PC-9 (cell line): ENCODE measurements at regions of chr3 and their contacts with region 1.

Region 1: GRCh38 chr3:50260027-50260941 is 8.7 kb upstream of the SEMA3B start:
- DNase-seq: peak; percentile 73 to 94
- H3K4me3 ChIP-seq: peak overlapping the region; percentile 60
- H3K27ac ChIP-seq: no peak overlapping the region
- H3K4me1 ChIP-seq: peaks cover 19% of the 10 kb centered on the region
- H3K27me3 ChIP-seq: no peaks in the 10 kb centered on the region
- CTCF ChIP-seq: peak; percentile 82

Region 2: GRCh38 chr3:50044976-50045375 is 215.3 kb before region 1 on chr3:
- CTCF ChIA-PET with region 1: no interaction called
- POLR2A ChIA-PET with region 1: no interaction called
- intact Hi-C with region 1: no loop called
- DNase-seq: no peak
- H3K4me3 ChIP-seq: no peak overlapping the region
- H3K27ac ChIP-seq: no peak overlapping the region
- H3K4me1 ChIP-seq: no peaks in the 10 kb centered on the region
- H3K27me3 ChIP-seq: no peaks in the 10 kb centered on the region
- CTCF ChIP-seq: no peak

Region 3: DNA sequence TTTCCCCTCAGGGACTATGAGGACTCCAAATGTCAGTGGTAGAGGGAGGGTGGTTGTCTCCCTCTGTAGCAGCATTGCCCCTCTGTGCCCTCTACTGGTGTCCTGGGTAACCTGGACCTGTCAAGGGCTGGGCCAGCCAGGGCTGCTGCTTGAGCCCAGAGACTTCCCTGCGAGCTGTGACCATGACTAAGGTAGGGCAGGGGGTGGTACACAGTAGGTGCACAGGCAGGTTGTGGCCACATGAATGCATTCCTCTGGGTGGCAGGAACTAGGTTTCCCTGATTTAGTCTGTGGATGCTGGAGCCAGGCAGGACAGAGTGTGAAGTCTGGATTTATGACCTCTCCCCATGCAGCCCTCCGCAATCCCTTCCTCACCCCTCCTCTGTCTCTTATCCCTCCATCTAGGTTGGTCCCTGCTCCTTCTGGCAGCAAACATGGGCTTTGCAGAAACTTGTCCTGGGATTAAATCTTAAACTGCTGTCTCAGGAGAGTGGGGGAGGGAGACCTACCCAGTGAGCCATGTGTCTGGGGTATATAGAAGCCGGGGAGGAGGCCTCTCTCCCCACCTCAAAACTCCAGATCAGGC is 113.9 kb before region 1 on chr3:
- CTCF ChIA-PET with region 1: no interaction called
- POLR2A ChIA-PET with region 1: no interaction called
- intact Hi-C with region 1: no loop called
- DNase-seq: no peak
- H3K4me3 ChIP-seq: no peak overlapping the region
- H3K27ac ChIP-seq: no peak overlapping the region
- H3K4me1 ChIP-seq: no peaks in the 10 kb centered on the region
- H3K27me3 ChIP-seq: no peaks in the 10 kb centered on the region
- CTCF ChIP-seq: no peak

Region 4: DNA sequence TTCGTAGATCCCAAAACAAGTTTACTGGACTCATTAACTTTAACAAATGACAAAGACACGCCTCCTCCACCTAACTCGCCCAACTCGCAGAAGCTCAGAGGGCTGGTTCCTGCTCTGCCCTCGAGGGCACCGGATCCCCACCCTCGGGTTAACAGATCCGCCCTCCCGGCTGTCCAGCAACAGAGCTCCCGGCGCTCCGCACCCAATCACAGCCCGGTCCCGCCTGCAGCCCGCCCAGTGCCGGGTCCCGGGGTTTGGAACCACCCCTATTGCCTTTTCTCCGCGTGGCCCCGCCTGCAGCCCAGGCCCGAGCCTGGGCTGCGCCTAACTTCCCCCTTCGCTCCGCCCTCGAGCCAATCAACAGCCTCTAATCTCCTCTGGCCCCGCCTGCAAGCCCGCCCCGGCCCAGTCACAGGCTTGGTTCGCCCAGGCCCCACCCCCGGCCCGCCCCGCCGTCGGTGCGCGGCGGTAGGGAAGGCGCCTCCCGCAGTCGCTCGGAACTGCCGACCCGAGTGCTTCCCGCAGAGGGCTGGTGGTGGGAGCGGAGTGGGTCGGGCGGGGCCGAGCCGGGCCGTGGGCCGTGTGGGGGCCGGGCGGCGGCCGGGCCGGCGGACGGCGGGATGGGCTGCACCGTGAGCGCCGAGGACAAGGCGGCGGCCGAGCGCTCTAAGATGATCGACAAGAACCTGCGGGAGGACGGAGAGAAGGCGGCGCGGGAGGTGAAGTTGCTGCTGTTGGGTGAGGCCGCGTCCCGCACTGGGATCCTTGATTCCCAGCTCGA is 24.4 kb before region 1 on chr3 and contains the start of gene GNAI2:
- CTCF ChIA-PET with region 1: no interaction called
- POLR2A ChIA-PET with region 1: interaction called, 18 read pairs
- intact Hi-C with region 1: loop called (anchors 2 kb)
- DNase-seq: peak; percentile 91 to 99
- H3K4me3 ChIP-seq: peak within 1 kb of the TSS; percentile 66
- H3K27ac ChIP-seq: no peak within 1 kb of the TSS
- H3K4me1 ChIP-seq: peaks cover 24% of the 10 kb centered on the region
- H3K27me3 ChIP-seq: no peaks in the 10 kb centered on the region
- CTCF ChIP-seq: no peak
- total RNA-seq, gene GNAI2: 156 and 201 TPM in 2 replicates

Region 5: DNA sequence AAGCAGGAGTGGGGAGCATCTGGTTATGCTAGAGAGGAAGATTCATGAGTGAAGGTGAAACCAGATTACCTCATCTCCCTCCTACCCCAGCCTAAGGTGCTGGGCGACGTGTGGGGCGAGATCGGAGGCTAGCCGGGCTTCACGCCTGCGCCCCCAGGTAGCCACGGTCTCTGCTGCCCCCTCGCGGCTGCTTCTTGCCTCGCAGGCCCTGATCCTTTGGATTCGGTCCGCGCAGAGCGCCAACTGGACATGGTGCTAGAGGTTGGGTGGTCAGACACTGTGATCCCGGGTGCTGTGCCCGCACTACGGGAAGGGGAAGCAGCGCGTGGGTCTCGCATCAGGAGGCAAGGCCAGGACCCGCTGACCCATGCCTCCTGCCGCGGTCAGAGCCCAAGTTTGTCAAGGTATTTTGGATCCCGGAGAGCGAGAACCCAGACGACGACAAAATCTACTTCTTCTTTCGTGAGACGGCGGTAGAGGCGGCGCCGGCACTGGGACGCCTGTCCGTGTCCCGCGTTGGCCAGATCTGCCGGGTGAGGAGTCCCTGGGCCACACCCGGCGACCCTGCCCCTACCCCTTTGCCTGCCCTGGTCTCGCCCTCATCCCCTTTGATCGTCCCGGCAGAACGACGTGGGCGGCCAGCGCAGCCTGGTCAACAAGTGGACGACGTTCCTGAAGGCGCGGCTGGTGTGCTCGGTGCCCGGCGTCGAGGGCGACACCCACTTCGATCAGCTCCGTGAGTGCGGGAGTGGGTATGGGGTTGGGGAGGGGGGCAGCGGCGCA is 12.8 kb after region 1 on chr3:
- CTCF ChIA-PET with region 1: interaction called, 9 read pairs
- POLR2A ChIA-PET with region 1: interaction called, 3 read pairs
- intact Hi-C with region 1: loop called (anchors 1 kb)
- DNase-seq: peak; percentile 61 to 85
- H3K4me3 ChIP-seq: no peak overlapping the region
- H3K27ac ChIP-seq: no peak overlapping the region
- H3K4me1 ChIP-seq: peaks cover 44% of the 10 kb centered on the region
- H3K27me3 ChIP-seq: no peaks in the 10 kb centered on the region
- CTCF ChIP-seq: peak; percentile 91

Region 6: GRCh38 chr3:50298836-50299637 is 38.8 kb after region 1 on chr3 and contains the starts of genes HYAL3 and NAA80:
- CTCF ChIA-PET with region 1: no interaction called
- POLR2A ChIA-PET with region 1: interaction called, 3 read pairs
- intact Hi-C with region 1: loop called (anchors 2 kb)
- DNase-seq: peak; percentile 94 to 99
- H3K4me3 ChIP-seq: peak within 1 kb of the TSS; percentile 95
- H3K27ac ChIP-seq: peak within 1 kb of the TSS; percentile 76
- H3K4me1 ChIP-seq: peaks cover 20% of the 10 kb centered on the region
- H3K27me3 ChIP-seq: no peaks in the 10 kb centered on the region
- CTCF ChIP-seq: no peak
- total RNA-seq, gene HYAL3: 10.2 and 12.2 TPM in 2 replicates
- total RNA-seq, gene NAA80: 25.2 and 25.7 TPM in 2 replicates

Region 7: GRCh38 chr3:50321336-50322114 is 61.2 kb after region 1 on chr3:
- CTCF ChIA-PET with region 1: interaction called, 13 read pairs
- POLR2A ChIA-PET with region 1: interaction called, 3 read pairs
- intact Hi-C with region 1: loop called (anchors 1 kb)
- DNase-seq: peak; percentile 69 to 89
- H3K4me3 ChIP-seq: peak overlapping the region; percentile 69
- H3K27ac ChIP-seq: peak overlapping the region; percentile 83
- H3K4me1 ChIP-seq: peaks cover 31% of the 10 kb centered on the region
- H3K27me3 ChIP-seq: no peaks in the 10 kb centered on the region
- CTCF ChIP-seq: peak; percentile 62

Region 8: DNA sequence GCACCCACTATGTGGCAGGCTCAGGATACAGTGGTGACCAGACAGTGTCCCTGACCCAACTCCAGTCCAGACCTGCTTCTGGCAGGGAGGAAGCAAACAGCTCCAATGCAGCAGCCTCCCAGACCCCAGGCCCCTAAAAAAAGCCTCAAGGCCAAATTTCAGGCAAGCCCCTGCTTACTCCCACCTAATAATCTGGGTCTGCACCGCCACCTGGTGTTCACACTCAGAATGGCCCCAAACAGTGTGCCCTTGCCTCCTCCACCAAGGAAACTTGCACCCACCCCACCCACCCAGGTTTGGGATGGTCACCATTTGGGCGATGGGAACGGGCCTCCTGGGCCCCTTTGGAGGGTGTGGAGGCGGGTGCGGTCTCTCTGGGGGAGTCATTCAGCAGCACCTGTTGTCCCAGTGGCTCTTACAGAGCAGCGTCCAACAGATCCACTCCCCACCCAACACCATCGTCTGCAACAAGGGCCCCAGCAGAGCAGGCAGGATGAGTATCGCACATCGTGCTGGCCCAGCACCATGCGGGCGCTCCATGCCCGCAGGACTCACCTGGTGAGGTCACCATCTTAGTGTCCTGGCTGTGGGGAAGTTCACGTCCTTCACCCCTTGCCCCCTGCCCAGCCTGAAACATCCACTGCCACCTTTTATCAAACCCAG is 289.9 kb after region 1 on chr3:
- CTCF ChIA-PET with region 1: no interaction called
- POLR2A ChIA-PET with region 1: no interaction called
- intact Hi-C with region 1: loop called (anchors 5 kb)
- DNase-seq: peak in 1 of 2 experiments; percentile 63
- H3K4me3 ChIP-seq: no peak overlapping the region
- H3K27ac ChIP-seq: no peak overlapping the region
- H3K4me1 ChIP-seq: no peaks in the 10 kb centered on the region
- H3K27me3 ChIP-seq: no peaks in the 10 kb centered on the region
- CTCF ChIP-seq: peak; percentile 72

Region 9: GRCh38 chr3:50600841-50601591 is 340.7 kb after region 1 on chr3:
- CTCF ChIA-PET with region 1: no interaction called
- POLR2A ChIA-PET with region 1: no interaction called
- intact Hi-C with region 1: loop called (anchors 2 kb)
- DNase-seq: peak; percentile 76 to 81
- H3K4me3 ChIP-seq: no peak overlapping the region
- H3K27ac ChIP-seq: peak overlapping the region; percentile 39; the same call in 1 of the 2 replicates
- H3K4me1 ChIP-seq: peaks cover 38% of the 10 kb centered on the region
- H3K27me3 ChIP-seq: no peaks in the 10 kb centered on the region
- CTCF ChIP-seq: no peak